ENCODE measurements at regions of chr15 and their contacts with region 1.

Region 1: DNA sequence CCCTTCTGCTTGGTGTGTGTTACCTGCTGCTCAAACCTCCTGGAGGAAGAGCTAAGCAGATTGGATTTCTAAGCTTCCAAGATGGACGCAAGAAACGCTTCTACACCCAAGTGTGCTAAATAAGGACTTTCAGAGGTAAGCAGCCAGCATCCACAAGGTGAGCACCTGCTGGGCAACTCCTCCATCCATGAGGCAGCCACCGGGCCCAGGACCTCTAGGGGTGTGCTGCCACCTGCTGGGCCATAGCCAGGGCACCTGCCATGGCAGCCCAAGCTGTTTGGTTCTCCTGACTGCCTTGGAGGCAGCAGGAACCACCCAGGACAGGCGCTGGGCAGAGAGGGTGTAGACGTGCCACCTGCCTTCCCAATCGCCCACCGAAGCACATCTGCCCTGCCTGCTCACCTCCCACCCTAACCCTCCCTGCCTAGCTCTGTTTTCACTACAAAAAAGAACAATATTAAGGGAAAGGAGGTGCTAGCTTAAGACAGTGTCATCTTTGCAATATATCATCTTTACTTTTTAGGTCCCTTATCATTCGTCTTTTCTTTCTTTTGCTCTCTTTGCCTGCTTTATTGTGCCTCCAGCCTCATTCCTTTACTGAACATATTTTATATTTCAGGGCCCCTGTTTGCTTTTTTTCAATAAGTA is 12.9 kb downstream of the C15orf62 start:
- DNase-seq: peak; percentile 76 to 88
- H3K4me3 ChIP-seq: no peak overlapping the region
- H3K4me3 Mint-ChIP-seq: no peak overlapping the region
- H3K27ac Mint-ChIP-seq: no peak overlapping the region
- H3K4me1 ChIP-seq: peaks cover 8% of the 10 kb centered on the region
- H3K4me1 Mint-ChIP-seq: peaks cover 8% of the 10 kb centered on the region
- H3K27me3 ChIP-seq: no peaks in the 10 kb centered on the region
- H3K27me3 Mint-ChIP-seq: no peaks in the 10 kb centered on the region
- CTCF ChIP-seq: peak; percentile 81 to 89

Region 2: GRCh38 chr15:40525855-40526254 is 256.8 kb before region 1 on chr15:
- CTCF ChIA-PET with region 1: no interaction called
- POLR2A ChIA-PET with region 1: no interaction called
- intact Hi-C with region 1: no loop called
- DNase-seq: no peak
- H3K4me3 ChIP-seq: no peak overlapping the region
- H3K4me3 Mint-ChIP-seq: no peak overlapping the region
- H3K27ac Mint-ChIP-seq: no peak overlapping the region
- H3K4me1 ChIP-seq: no peaks in the 10 kb centered on the region
- H3K4me1 Mint-ChIP-seq: no peaks in the 10 kb centered on the region
- H3K27me3 ChIP-seq: no peaks in the 10 kb centered on the region
- H3K27me3 Mint-ChIP-seq: no peaks in the 10 kb centered on the region
- CTCF ChIP-seq: no peak

Region 3: GRCh38 chr15:40684381-40684780 is 98.3 kb before region 1 on chr15:
- CTCF ChIA-PET with region 1: no interaction called
- POLR2A ChIA-PET with region 1: no interaction called
- intact Hi-C with region 1: loop called (anchors 5 kb)
- DNase-seq: no peak
- H3K4me3 ChIP-seq: no peak overlapping the region
- H3K4me3 Mint-ChIP-seq: no peak overlapping the region
- H3K27ac Mint-ChIP-seq: no peak overlapping the region
- H3K4me1 ChIP-seq: no peaks in the 10 kb centered on the region
- H3K4me1 Mint-ChIP-seq: peaks cover 10% of the 10 kb centered on the region
- H3K27me3 ChIP-seq: no peaks in the 10 kb centered on the region
- H3K27me3 Mint-ChIP-seq: no peaks in the 10 kb centered on the region
- CTCF ChIP-seq: no peak

Region 4: GRCh38 chr15:40702077-40702476 is 80.6 kb before region 1 on chr15:
- CTCF ChIA-PET with region 1: no interaction called
- POLR2A ChIA-PET with region 1: no interaction called
- intact Hi-C with region 1: loop called (anchors 2 kb)
- DNase-seq: peak in 1 of 2 experiments; percentile 26
- H3K4me3 ChIP-seq: no peak overlapping the region
- H3K4me3 Mint-ChIP-seq: no peak overlapping the region
- H3K27ac Mint-ChIP-seq: no peak overlapping the region
- H3K4me1 ChIP-seq: peaks cover 5% of the 10 kb centered on the region; the same call in 1 of the 2 replicates
- H3K4me1 Mint-ChIP-seq: peaks cover under 1% of the 10 kb centered on the region
- H3K27me3 ChIP-seq: no peaks in the 10 kb centered on the region
- H3K27me3 Mint-ChIP-seq: no peaks in the 10 kb centered on the region
- CTCF ChIP-seq: peak in 1 of 2 experiments; percentile 18

Region 5: GRCh38 chr15:40763801-40764732 is 18.6 kb before region 1 on chr15 and contains the start of gene GCHFR:
- CTCF ChIA-PET with region 1: interaction called, 14 read pairs
- POLR2A ChIA-PET with region 1: no interaction called
- intact Hi-C with region 1: no loop called
- DNase-seq: peak; percentile 90 to 93
- H3K4me3 ChIP-seq: peak within 1 kb of the TSS; percentile 92
- H3K4me3 Mint-ChIP-seq: peak within 1 kb of the TSS; percentile 86
- H3K27ac Mint-ChIP-seq: peak within 1 kb of the TSS; percentile 90
- H3K4me1 ChIP-seq: peaks cover 7% of the 10 kb centered on the region; the same call in 1 of the 2 replicates
- H3K4me1 Mint-ChIP-seq: peaks cover 11% of the 10 kb centered on the region
- H3K27me3 ChIP-seq: no peaks in the 10 kb centered on the region
- H3K27me3 Mint-ChIP-seq: no peaks in the 10 kb centered on the region
- CTCF ChIP-seq: peak; percentile 17 to 49
- total RNA-seq, gene GCHFR: 54.4 and 59.2 TPM in 2 replicates

Region 6: DNA sequence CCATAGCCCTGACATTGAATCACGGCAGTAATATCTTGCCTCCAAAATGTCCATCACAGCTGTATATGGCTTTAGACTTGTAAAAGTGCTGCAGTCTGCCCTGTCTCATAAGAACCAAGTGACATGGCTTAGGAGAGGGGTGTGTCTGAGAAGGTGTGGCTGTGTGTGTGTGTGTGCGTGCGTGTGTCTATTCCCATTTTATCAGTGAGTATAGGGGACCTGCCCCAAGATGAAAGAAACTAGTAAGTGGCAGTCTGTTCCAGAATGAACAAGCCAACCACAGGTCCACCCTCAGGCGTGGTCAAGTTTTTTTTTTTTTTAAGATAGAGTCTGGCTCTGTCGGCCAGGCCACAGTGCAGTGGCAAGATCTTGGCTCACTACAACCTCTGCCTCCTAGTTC is 96.9 kb after region 1 on chr15:
- CTCF ChIA-PET with region 1: no interaction called
- POLR2A ChIA-PET with region 1: no interaction called
- intact Hi-C with region 1: no loop called
- DNase-seq: no peak
- H3K4me3 ChIP-seq: no peak overlapping the region
- H3K4me3 Mint-ChIP-seq: no peak overlapping the region
- H3K27ac Mint-ChIP-seq: no peak overlapping the region
- H3K4me1 ChIP-seq: no peaks in the 10 kb centered on the region; the same call in 1 of the 2 replicates
- H3K4me1 Mint-ChIP-seq: no peaks in the 10 kb centered on the region
- H3K27me3 ChIP-seq: no peaks in the 10 kb centered on the region
- H3K27me3 Mint-ChIP-seq: no peaks in the 10 kb centered on the region
- CTCF ChIP-seq: no peak

Region 7: DNA sequence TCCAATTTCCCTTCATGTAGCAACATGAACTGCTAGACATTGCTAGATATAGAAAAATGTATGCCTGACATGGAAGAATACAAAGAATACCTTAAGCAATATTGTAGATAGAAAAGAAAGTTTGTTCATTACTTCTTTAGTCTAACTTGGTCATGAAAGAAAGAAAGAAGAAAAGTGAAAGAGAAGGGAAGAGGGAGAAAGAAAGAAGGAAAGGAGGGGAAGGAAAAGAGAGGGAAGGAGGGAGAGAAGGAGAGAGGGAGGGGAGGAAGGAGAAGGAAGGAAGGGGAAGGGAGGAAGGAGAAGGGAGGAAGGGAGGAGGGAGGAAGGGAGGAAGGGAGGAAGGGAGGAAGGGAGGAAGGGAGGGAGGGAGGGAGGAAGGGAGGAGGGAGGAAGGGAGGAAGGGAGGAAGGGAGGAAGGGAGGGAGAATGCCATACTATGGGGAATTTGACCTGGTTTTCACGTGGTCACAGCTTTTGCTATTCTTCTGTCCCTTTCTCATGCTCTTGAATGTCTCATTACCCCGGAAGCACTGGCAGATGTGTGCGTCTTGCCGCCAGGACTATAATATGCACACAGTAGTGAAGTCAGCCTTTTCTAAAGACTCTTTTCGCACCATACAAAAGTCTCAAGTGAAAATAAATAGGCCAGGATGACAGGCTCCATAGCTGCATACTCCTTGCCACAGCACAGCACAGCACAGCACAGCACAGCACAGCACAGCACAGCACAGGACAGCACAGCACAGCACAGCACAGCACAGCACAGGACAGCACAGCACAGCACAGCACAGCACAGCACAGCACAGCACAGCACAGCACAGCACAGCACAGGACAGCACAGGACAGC is 248.8 kb after region 1 on chr15:
- CTCF ChIA-PET with region 1: no interaction called
- POLR2A ChIA-PET with region 1: no interaction called
- intact Hi-C with region 1: no loop called
- DNase-seq: no peak
- H3K4me3 ChIP-seq: no peak overlapping the region
- H3K4me3 Mint-ChIP-seq: no peak overlapping the region
- H3K27ac Mint-ChIP-seq: no peak overlapping the region
- H3K4me1 ChIP-seq: no peaks in the 10 kb centered on the region
- H3K4me1 Mint-ChIP-seq: no peaks in the 10 kb centered on the region
- H3K27me3 ChIP-seq: no peaks in the 10 kb centered on the region
- H3K27me3 Mint-ChIP-seq: no peaks in the 10 kb centered on the region
- CTCF ChIP-seq: no peak